ENCODE measurements at regions of chr12 and their contacts with region 1.

Region 1: DNA sequence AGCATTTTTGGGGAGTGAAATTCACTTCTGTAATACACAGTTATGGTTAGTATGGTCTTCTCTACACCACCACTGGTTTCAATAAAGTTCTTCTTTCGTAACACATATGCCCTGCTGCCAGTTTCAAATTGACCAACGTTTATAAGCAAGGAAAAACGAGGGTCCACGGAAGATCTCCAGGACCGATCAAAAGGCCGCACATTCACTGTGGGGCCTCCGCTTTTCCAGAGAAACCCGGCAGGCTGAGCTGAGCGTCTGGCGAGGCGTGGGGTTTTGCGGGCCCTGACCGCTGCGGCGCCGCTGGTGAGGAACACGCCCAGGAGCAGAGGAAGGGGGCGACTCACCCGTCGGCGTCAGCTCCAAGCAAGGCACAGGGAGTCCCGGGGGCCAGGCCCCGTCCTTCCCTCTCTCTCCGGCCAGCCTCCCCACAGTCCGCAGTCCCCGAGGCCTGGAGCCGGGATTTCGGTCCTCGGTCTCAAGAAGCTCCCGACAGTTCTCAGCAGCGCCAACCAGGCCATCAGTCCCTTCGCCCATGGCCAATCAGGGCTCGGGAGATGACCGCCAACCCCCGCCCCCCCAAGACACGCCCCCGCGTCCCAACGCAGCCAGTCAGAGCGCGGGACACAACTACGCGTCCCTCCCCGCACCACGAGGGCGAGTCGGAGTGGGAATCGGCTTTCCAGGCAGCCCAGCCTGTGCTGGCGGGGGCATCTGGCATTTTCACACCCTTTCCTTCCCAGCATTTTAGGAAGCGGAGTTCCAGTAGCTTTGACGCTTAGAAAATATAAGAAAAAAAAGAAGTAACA is at the start of gene MTERF2:
- DNase-seq: peak; percentile 99
- H3K4me3 ChIP-seq: peak within 1 kb of the TSS; percentile 60 to 76 (median 70)
- H3K27ac ChIP-seq: peak within 1 kb of the TSS; percentile 85 to 93 (median 93)
- H3K4me1 ChIP-seq: peaks cover 21 to 60% (median 55%) of the 10 kb centered on the region in 4 donors
- H3K27me3 ChIP-seq: no peaks in the 10 kb centered on the region
- CTCF ChIP-seq: no peak
- EP300 ChIP-seq: no peak
- POLR2A ChIP-seq: no peak
- total RNA-seq, gene MTERF2: 16.7 to 22.2 (median 19.0) TPM

Region 2: DNA sequence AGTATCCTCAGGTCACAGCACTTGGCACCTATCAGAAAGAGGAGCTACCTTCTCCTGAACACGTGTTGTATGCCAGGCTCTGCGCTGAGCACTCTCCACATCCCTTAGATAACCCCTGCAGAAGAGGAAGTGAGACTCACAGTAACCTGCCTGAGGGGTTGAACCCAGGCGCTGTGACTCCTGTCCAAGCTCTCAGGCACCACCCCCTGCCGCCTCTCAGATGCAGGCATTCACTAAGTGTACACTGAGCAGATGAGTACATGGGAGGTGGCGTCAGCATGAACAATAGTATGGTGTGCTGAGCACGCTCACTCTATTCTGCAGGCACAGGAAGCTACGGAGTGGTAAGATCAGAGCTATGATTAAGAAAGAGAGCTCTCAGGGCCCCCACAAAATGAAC is 233.3 kb before region 1 on chr12:
- intact Hi-C with region 1: no loop called
- DNase-seq: no peak
- H3K4me3 ChIP-seq: no peak overlapping the region
- H3K27ac ChIP-seq: no peak overlapping the region
- H3K4me1 ChIP-seq: no peaks in the 10 kb centered on the region
- H3K27me3 ChIP-seq: no peaks in the 10 kb centered on the region
- CTCF ChIP-seq: no peak
- EP300 ChIP-seq: no peak
- POLR2A ChIP-seq: no peak

Region 3: DNA sequence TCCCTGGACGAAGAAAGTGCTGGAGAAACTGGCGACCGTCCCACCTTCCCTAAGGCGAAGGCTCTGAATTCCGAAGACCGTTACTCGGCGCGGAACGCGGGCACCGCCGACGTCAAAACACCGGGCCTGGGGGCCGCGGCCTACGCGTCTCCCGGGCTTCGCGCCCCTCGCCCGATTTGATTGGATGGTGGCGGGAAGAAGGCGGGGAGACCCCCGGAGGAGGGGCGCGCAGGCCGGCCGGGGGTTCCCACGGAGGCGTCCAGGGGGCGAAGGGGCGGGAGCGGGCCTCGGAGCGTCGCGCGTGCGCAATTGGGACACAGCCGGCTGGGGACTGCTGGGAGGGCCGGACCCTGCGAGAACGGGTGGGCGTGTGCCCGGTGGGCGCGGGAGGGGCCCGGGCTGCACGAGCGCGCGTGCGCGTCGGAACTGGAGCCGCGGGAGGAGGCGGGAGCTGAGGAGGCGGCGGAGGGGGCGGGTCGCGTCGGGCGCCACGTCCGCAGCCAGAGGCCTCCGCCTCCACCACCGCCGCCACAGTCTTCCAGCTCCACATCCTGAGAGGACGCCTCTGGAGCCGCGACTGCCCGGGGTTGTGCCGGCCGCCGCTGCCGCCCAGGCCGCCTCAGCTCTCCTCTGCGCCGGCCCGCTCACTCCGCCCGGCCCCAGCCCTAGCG is 31.3 kb before region 1 on chr12 and contains the start of gene TMEM263:
- intact Hi-C with region 1: loop called (anchors 1 kb)
- DNase-seq: peak; percentile 97
- H3K4me3 ChIP-seq: peak within 1 kb of the TSS; percentile 82 to 95 (median 94)
- H3K27ac ChIP-seq: peak within 1 kb of the TSS; percentile 96 to 100 (median 98)
- H3K4me1 ChIP-seq: peaks cover 22 to 43% (median 37%) of the 10 kb centered on the region in 4 donors
- H3K27me3 ChIP-seq: no peaks in the 10 kb centered on the region
- CTCF ChIP-seq: no peak
- EP300 ChIP-seq: no peak
- POLR2A ChIP-seq: peak; percentile 82
- total RNA-seq, gene TMEM263: 31.1 to 39.9 (median 34.5) TPM

Region 4: DNA sequence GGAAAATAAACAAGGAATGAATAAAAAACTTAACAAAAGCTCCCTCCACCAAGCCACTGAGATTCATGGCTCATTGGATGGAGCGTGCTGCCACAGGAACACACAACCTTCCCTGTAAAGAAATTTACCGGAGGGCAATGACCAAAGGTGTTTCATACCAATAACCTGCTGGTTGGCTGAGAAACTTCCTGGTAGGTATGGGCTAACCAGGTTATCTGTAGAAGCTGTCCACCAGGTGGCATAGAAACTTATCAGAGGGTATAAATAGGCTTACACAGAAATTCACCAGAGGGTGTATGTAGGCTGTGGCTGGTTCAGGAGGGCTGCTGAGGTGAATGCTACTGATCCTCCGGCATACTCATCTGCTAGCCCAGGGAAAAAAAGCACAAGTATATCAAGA is 27.2 kb after region 1 on chr12:
- intact Hi-C with region 1: no loop called
- DNase-seq: no peak
- H3K4me3 ChIP-seq: no peak overlapping the region
- H3K27ac ChIP-seq: no peak overlapping the region
- H3K4me1 ChIP-seq: peaks cover 0 to 14% (median 3%) of the 10 kb centered on the region in 4 donors
- H3K27me3 ChIP-seq: no peaks in the 10 kb centered on the region
- CTCF ChIP-seq: no peak
- EP300 ChIP-seq: no peak
- POLR2A ChIP-seq: no peak

Measured in esophagus muscularis mucosa (tissue), 4 donors.